Right ventricle myocardium inferior (tissue), 1 donor: ENCODE measurements at regions of chr4 and their contacts with region 1.

Region 1: DNA sequence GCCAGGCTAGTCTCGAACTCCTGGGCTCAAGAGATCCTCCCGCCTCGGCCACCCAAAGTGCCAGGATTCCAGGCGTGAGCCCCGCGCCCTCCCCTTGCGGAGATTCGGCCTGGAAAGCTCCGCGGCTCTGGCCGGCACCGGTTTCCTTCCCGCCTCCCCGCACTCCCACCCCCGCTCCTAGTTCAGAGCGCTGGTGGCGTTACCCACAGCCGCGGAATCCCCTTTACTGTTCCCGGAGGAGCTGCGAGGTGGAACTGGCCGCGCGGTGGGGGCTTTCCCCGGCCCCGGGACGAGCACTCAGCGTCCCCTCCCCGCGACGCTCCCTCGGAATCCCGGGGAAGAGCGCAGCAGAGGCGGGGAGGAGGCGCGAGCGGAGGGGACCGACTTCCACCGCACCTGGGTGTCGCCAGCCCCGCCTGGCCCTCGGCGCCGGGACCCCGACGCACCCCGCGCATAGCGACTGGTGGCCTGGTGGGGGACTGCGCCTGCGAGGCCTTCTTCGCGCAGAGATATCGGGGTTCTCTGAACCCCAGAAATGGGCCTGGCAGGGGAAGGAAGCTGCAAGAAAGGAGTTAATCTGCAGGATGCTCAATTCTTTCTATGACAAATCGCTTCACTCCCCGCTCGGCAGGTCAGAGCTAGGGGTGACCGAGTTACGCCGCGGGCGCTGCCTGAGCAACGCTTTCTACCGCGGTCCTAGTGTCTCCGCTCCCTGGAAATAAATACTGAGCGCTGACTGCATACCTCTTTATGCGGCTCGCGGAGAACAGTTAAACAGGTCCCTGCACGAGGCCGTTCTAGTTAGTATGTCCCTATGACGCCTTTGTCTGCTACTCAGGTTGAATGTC is 14.6 kb upstream of the SLC25A4 start:
- DNase-seq: peak; percentile 66
- ATAC-seq: peak; percentile 58

Region 2: GRCh38 chr4:185039508-185040273 is 88.8 kb before region 1 on chr4:
- intact Hi-C with region 1: no loop called
- DNase-seq: no peak
- ATAC-seq: peak; percentile 59

Region 3: GRCh38 chr4:185108669-185109068 is 19.8 kb before region 1 on chr4:
- intact Hi-C with region 1: loop called (anchors 2 kb)
- DNase-seq: no peak
- ATAC-seq: no peak